ENCODE measurements at regions of chr3 and their contacts with region 1.

Region 1: GRCh38 chr3:71428841-71429596 is 154.5 kb downstream of the FOXP1 start:
- DNase-seq: no peak
- ATAC-seq: no peak
- H3K4me3 ChIP-seq: no peak overlapping the region
- H3K27ac ChIP-seq: no peak overlapping the region
- H3K4me1 ChIP-seq: peaks cover 28% of the 10 kb centered on the region
- H3K27me3 ChIP-seq: no peaks in the 10 kb centered on the region
- CTCF ChIP-seq: no peak

Region 2: GRCh38 chr3:71210257-71211007 is 218.6 kb before region 1 on chr3:
- CTCF ChIA-PET with region 1: no interaction called
- POLR2A ChIA-PET with region 1: no interaction called
- intact Hi-C with region 1: no loop called
- DNase-seq: no peak
- ATAC-seq: no peak
- H3K4me3 ChIP-seq: no peak overlapping the region
- H3K27ac ChIP-seq: no peak overlapping the region
- H3K4me1 ChIP-seq: peaks cover 38% of the 10 kb centered on the region
- H3K27me3 ChIP-seq: no peaks in the 10 kb centered on the region
- CTCF ChIP-seq: no peak

Region 3: DNA sequence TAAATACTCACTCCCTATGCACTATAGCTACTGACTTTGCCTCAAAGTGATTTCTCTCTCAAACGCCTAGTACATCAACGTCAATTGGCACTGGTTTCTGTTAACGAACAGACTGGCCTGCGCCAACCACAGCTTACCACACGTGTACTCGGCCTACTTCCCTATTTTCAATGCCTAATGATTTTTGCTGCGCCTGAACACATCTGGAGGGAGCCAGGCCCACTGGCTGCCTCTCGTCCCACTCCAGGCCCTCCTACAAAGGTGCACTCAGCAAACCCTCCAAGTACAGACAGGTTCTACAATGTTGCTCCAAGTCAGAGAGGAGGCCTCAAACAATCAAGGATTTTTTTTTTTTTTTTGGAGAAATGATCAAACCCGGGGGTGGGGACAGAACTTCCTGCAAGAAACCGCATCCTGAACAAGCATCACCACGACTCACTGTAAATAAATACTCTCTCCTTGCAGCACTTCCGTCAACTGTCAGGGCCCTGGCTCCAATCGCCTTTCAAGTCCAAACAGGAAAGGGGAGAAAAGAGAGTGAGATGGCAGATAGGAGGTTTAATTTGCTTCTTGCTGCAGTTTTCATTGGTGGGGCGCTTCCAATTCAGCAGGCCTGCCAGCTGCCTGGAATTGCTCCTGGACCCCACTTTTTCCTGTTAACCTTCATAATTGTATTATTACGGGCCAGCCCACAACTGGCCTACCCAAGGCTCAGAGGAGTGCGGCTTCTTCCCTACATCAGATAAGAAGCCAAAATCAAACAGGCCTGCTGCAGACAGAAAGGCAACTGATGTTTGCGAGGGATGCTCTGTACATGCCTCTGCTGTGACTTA is 15.2 kb after region 1 on chr3:
- CTCF ChIA-PET with region 1: no interaction called
- POLR2A ChIA-PET with region 1: interaction called, 3 read pairs
- intact Hi-C with region 1: loop called (anchors 1 kb)
- DNase-seq: peak; percentile 91
- ATAC-seq: peak; percentile 89
- H3K4me3 ChIP-seq: peak overlapping the region; percentile 14; the same call in 1 of the 2 replicates
- H3K27ac ChIP-seq: peak overlapping the region; percentile 82
- H3K4me1 ChIP-seq: peaks cover 22% of the 10 kb centered on the region
- H3K27me3 ChIP-seq: no peaks in the 10 kb centered on the region
- CTCF ChIP-seq: no peak

Region 4: DNA sequence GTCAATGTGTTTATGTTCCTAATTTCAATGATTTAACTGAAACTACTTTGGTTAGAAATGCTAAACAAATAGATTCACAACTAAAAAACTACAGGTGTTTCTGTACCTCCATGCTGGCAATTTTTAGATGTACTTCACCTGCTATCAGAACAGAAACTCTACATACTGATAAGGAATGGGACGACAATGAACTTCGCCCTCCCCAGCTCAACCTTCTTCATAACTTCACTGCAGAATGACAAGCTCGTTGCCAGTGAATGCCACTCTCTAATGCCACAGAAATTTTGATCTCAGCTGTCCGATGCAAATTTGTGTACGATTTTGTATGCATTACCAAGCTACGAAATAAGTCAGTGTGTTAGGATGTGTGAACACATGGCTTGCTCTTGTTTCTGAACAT is 21.1 kb after region 1 on chr3:
- CTCF ChIA-PET with region 1: no interaction called
- POLR2A ChIA-PET with region 1: interaction called, 10 read pairs
- intact Hi-C with region 1: no loop called
- DNase-seq: no peak
- ATAC-seq: no peak
- H3K4me3 ChIP-seq: no peak overlapping the region
- H3K27ac ChIP-seq: no peak overlapping the region
- H3K4me1 ChIP-seq: peaks cover 25% of the 10 kb centered on the region
- H3K27me3 ChIP-seq: no peaks in the 10 kb centered on the region
- CTCF ChIP-seq: no peak

Region 5: DNA sequence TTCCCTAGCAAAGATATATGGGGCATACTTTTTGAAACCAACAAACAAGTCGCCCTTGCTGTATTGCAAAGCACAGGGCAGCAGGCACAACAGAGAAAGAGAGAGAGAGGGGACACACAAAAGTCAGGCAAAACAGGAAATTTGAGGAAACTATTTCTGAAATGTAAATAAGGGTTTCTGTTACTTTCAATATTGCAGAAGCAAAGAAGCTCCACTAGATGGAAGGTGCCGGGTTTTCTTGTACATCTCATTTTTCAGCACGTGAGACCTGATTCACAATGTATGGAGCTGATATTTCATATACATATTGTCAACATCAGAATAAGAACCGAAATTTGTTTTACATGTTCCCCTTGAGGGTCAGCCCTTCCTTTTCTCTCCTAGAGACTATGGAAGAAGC is 27.1 kb after region 1 on chr3:
- CTCF ChIA-PET with region 1: no interaction called
- POLR2A ChIA-PET with region 1: interaction called, 9 read pairs
- intact Hi-C with region 1: loop called (anchors 1 kb)
- DNase-seq: no peak
- ATAC-seq: no peak
- H3K4me3 ChIP-seq: no peak overlapping the region
- H3K27ac ChIP-seq: no peak overlapping the region
- H3K4me1 ChIP-seq: peaks cover 47% of the 10 kb centered on the region
- H3K27me3 ChIP-seq: no peaks in the 10 kb centered on the region
- CTCF ChIP-seq: no peak

Region 6: DNA sequence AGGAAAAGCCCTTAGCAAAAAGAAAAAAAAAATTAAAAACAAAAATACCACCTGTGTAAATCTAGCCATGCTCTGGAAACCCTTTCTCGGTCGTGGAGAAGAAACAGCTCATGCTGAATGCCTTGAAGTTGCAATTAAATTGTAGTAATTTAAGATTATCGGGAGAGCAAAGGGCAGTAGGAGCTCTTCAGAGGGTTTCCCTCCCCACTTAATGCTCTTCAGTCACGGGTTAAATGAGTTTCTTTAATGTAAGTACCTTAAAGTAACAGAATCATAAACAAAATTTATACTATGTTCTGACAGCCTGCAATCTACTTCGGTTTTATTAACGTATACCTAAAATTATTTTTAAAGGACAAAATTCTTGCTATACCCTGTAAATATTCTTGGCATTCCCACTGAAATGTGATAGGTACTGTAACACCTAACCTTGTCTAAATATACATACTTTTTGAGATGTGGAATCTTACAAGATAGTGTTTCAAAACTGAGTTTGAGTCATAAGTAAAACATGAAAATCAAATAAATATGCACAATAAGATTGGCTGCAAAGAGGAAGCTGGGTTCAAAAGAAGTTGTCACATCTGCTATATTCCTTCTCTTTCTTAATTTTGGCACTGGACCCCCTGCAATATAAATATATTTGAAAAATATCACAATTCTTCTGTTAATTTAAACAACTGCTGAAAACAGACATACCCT is 149.2 kb after region 1 on chr3:
- CTCF ChIA-PET with region 1: no interaction called
- POLR2A ChIA-PET with region 1: no interaction called
- intact Hi-C with region 1: no loop called
- DNase-seq: peak; percentile 75
- ATAC-seq: peak; percentile 21
- H3K4me3 ChIP-seq: peak overlapping the region; percentile 7; the same call in 1 of the 2 replicates
- H3K27ac ChIP-seq: no peak overlapping the region
- H3K4me1 ChIP-seq: peaks cover 38% of the 10 kb centered on the region
- H3K27me3 ChIP-seq: no peaks in the 10 kb centered on the region
- CTCF ChIP-seq: no peak

Measured in PC-3 (cell line).